Panc1 (cell line): ENCODE measurements at regions of chr11 and their contacts with region 1.

Region 1: DNA sequence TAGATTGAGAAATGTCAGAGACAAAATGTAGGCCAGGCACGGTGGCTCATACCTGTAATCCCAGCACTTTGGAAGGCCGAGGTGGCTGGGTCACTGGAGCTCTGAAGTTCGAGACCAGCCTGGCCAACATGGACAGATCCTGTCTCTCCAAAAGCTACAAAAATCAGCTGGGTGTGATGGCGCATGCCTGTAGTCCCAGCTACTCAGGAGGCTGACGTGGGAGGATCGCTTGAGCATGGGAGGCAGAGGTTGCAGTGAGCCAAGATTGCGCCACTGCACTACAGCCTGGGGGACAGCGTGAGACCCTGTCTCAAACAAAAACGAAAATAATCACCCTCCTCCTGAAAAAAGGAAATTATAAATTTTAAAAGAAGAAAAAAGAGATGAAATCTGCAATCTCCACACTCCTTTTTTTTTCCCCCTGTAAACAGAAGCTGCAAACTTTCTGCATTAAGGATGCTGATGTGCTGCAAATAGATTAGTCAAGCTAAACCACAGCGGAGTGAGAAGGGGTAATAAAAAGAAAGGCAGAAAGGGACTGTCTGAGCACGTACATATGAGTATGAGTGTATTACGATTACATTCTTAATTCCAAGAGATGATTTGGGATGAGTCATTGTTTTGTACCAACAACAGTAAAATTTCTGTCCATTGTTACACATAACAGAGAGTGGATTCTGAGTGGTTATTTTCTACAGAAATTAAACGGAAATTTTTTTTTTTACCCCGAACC is 87.3 kb downstream of the SIK3 start:
- DNase-seq: peak; percentile 78
- ATAC-seq: peak; percentile 95
- H3K4me3 ChIP-seq: no peak overlapping the region
- H3K27ac ChIP-seq: no peak overlapping the region; the same call in 1 of the 2 replicates
- H3K4me1 ChIP-seq: peaks cover 17% of the 10 kb centered on the region; the same call in 1 of the 2 replicates
- H3K27me3 ChIP-seq: no peaks in the 10 kb centered on the region
- CTCF ChIP-seq: no peak

Region 2: GRCh38 chr11:116294631-116295030 is 716.3 kb before region 1 on chr11:
- CTCF ChIA-PET with region 1: no interaction called
- POLR2A ChIA-PET with region 1: no interaction called
- in situ Hi-C with region 1: no loop called
- intact Hi-C with region 1: no loop called
- DNase-seq: no peak
- ATAC-seq: no peak
- H3K4me3 ChIP-seq: no peak overlapping the region
- H3K27ac ChIP-seq: no peak overlapping the region
- H3K4me1 ChIP-seq: no peaks in the 10 kb centered on the region
- H3K27me3 ChIP-seq: no peaks in the 10 kb centered on the region
- CTCF ChIP-seq: no peak

Region 3: DNA sequence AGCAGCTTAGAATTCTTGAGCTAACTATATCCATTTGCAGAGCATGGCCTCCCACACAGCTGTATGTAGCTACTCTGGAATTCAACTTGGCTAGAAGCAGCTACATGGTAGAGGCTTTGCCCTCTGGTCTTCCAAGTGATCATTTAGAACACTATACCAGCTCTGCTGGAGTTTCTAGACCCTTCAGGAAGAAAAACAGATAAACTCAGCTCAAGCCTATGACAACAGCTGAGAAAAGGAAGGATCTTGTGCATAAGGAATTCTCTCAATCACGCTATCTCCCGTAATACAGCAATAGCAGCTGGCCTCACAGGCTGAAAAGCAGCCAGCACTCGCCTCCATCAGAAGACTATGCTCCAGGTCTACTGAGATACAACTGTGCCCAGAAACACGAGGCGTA is 123.0 kb before region 1 on chr11:
- CTCF ChIA-PET with region 1: no interaction called
- POLR2A ChIA-PET with region 1: interaction called, 12 read pairs
- in situ Hi-C with region 1: no loop called
- intact Hi-C with region 1: no loop called
- DNase-seq: no peak
- ATAC-seq: no peak
- H3K4me3 ChIP-seq: no peak overlapping the region
- H3K27ac ChIP-seq: no peak overlapping the region
- H3K4me1 ChIP-seq: no peaks in the 10 kb centered on the region
- H3K27me3 ChIP-seq: no peaks in the 10 kb centered on the region
- CTCF ChIP-seq: no peak

Region 4: GRCh38 chr11:116972691-116973090 is 38.3 kb before region 1 on chr11:
- CTCF ChIA-PET with region 1: interaction called, 3 read pairs
- POLR2A ChIA-PET with region 1: interaction called, 11 read pairs
- in situ Hi-C with region 1: no loop called
- intact Hi-C with region 1: no loop called
- DNase-seq: no peak
- ATAC-seq: no peak
- H3K4me3 ChIP-seq: no peak overlapping the region
- H3K27ac ChIP-seq: no peak overlapping the region
- H3K4me1 ChIP-seq: peaks cover 12% of the 10 kb centered on the region
- H3K27me3 ChIP-seq: no peaks in the 10 kb centered on the region
- CTCF ChIP-seq: no peak; the same call in none of the 2 replicates